ENCODE measurements at regions of chr4 and their contacts with region 1.

Region 1: DNA sequence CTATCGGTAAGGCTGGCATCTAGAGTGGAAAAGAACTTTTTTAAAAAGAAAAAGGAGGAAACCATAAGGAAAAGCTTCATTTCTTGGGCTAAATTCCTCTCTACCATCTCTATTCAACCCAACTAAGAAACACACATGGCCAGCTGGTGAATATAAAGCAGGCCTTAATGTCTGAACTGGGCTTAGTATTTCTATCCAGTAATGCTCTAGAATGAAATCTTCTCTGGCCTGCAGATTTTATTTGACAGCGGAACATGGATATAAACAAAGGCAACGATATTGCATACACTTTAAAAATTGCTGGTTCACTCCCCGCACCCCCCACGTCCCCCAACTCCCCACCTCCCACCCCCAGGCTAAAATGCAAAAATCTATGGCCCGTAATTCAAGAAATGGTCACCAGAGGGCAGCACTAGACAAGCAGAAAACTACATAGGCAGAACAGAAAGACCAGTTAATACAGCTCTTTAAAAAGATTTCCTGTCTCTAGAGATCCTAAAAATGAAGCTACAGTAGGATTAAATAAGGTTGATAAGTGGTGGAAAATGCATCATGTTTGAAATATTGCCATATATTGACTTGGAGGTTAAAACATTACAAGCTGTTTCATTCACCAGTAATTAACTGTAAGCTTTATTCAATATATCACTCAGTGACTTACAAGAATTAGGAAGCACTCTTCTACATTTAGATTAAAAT is 155.2 kb upstream of the GALNT7 start:
- DNase-seq: peak; percentile 68
- H3K4me3 ChIP-seq: no peak overlapping the region
- H3K27ac ChIP-seq: peak overlapping the region; percentile 52
- H3K4me1 ChIP-seq: peaks cover 12% of the 10 kb centered on the region
- H3K27me3 ChIP-seq: no peaks in the 10 kb centered on the region
- CTCF ChIP-seq: peak; percentile 25 to 45
- POLR2A ChIP-seq: no peak

Region 2: DNA sequence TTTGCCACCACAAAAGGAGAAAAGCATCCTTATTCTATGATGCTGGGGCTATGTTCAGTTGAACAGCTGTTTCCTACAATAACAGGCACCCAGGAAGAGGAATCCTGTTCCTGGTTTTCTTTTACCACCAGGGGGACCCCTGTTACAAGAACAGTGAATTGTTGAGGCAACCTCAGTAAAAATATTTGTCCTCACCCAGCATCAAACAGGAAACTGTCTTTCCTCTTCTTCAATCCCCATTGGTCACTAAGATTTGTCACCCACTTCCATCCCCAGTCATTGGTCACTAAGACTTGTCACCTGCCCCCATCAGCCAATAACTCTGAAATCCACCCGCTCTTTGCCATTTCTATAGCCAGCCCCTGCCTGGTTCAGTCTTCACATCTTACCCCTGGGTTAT is 11.8 kb after region 1 on chr4:
- CTCF ChIA-PET with region 1: interaction called, 43 read pairs
- POLR2A ChIA-PET with region 1: no interaction called
- dilution Hi-C with region 1: no loop called
- intact Hi-C with region 1: loop called (anchors 1 kb)
- DNase-seq: peak; percentile 38
- H3K4me3 ChIP-seq: no peak overlapping the region
- H3K27ac ChIP-seq: no peak overlapping the region
- H3K4me1 ChIP-seq: no peaks in the 10 kb centered on the region
- H3K27me3 ChIP-seq: no peaks in the 10 kb centered on the region
- CTCF ChIP-seq: peak; percentile 33 to 41
- POLR2A ChIP-seq: no peak

Region 3: GRCh38 chr4:173252024-173252935 is 238.9 kb after region 1 on chr4:
- CTCF ChIA-PET with region 1: interaction called, 403 read pairs
- POLR2A ChIA-PET with region 1: interaction called, 5 read pairs
- dilution Hi-C with region 1: no loop called
- intact Hi-C with region 1: loop called (anchors 1 kb)
- DNase-seq: peak; percentile 99
- H3K4me3 ChIP-seq: no peak overlapping the region
- H3K27ac ChIP-seq: peak overlapping the region; percentile 67
- H3K4me1 ChIP-seq: peaks cover 25% of the 10 kb centered on the region
- H3K27me3 ChIP-seq: no peaks in the 10 kb centered on the region
- CTCF ChIP-seq: no peak
- POLR2A ChIP-seq: peak; percentile 41

Region 4: GRCh38 chr4:173293663-173294062 is 280.3 kb after region 1 on chr4:
- CTCF ChIA-PET with region 1: interaction called, 124 read pairs
- POLR2A ChIA-PET with region 1: no interaction called
- dilution Hi-C with region 1: no loop called
- intact Hi-C with region 1: no loop called
- DNase-seq: no peak
- H3K4me3 ChIP-seq: no peak overlapping the region
- H3K27ac ChIP-seq: no peak overlapping the region
- H3K4me1 ChIP-seq: no peaks in the 10 kb centered on the region
- H3K27me3 ChIP-seq: no peaks in the 10 kb centered on the region
- CTCF ChIP-seq: no peak
- POLR2A ChIP-seq: no peak

Region 5: DNA sequence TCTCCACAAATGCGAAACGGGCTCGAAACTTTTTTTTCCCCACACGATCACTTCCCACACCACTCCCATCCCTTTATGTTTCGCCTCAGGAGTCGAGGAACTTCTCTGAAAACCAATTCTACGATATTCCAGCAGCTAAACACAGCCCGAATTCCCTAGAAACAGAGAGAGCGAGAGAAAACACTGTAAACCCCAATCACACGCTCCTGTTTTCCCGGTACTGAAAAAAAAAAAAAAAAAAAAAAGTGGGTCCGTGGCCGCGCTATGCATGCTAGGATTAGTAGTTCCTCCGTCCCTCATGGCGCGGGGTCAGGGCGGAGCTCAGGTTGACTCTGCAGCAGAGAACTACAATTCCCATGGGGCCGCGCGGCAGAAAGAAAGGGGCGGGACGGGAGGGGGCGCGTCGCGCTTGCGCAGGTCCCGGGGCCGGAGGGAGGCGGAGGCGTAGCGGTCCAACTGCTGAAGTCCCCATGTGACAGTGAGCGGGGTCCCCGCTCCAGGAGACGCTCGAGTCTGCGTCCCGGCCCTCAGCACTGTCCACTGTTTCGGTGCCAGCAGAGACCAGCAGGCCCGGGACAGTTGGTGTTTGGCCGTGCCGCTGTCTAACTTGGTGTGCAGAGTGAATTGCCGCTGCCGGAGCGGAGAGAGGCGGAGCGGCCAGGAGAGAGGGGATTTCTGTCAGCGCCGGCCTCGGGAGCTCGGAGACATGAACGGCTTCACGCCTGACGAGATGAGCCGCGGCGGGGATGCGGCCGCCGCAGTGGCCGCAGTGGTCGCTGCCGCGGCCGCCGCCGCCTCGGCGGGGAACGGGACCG is 357.3 kb after region 1 on chr4 and contains the start of gene SAP30:
- CTCF ChIA-PET with region 1: interaction called, 4 read pairs
- POLR2A ChIA-PET with region 1: no interaction called
- dilution Hi-C with region 1: no loop called
- intact Hi-C with region 1: loop called (anchors 5 kb)
- DNase-seq: peak; percentile 99
- H3K4me3 ChIP-seq: peak within 1 kb of the TSS; percentile 87 to 99 (median 91)
- H3K27ac ChIP-seq: peak within 1 kb of the TSS; percentile 93
- H3K4me1 ChIP-seq: peaks cover 24% of the 10 kb centered on the region
- H3K27me3 ChIP-seq: no peaks in the 10 kb centered on the region
- CTCF ChIP-seq: no peak
- POLR2A ChIP-seq: peak; percentile 95
- total RNA-seq, gene SAP30: 23.8 and 27.1 TPM in 2 replicates

Region 6: GRCh38 chr4:173494013-173494970 is 480.9 kb after region 1 on chr4:
- CTCF ChIA-PET with region 1: interaction called, 8 read pairs
- POLR2A ChIA-PET with region 1: no interaction called
- dilution Hi-C with region 1: no loop called
- intact Hi-C with region 1: loop called (anchors 2 kb)
- DNase-seq: peak; percentile 53
- H3K4me3 ChIP-seq: peak overlapping the region; percentile 18 to 51 (median 24)
- H3K27ac ChIP-seq: no peak overlapping the region
- H3K4me1 ChIP-seq: peaks cover 14% of the 10 kb centered on the region
- H3K27me3 ChIP-seq: peaks cover 22 to 30% of the 10 kb centered on the region in 2 experiments
- CTCF ChIP-seq: peak; percentile 58 to 77
- POLR2A ChIP-seq: no peak